GM13976 (cell line): ENCODE measurements at regions of chr14 and their contacts with region 1.

Region 1: GRCh38 chr14:105817971-105818711 is 291.8 kb downstream of the TMEM121 start:
- DNase-seq: peak; percentile 50
- CTCF ChIP-seq: no peak

Region 2: DNA sequence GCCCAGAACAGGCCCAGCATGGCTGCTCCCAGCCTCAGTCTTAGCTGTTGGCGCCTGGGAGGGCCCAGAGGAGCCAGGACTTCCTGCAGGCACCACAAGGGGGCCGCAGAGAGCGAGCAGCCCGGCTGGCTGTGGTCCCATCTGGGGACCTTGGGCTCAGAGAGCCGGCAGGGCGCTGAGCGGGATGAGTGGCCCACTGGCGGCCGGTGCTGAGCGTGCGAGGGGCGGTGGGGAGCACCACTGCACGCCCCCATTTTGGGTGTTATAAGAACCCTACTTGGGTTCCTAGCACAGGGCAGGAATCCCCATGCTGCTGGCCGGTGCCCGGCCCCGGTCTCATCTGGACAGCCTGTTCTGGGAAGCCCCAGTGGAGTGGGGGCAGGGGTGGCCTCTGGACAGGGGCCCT is 369.4 kb before region 1 on chr14:
- in situ Hi-C with region 1: no loop called
- DNase-seq: peak; percentile 89
- CTCF ChIP-seq: peak; percentile 78

Region 3: GRCh38 chr14:106268013-106268727 is 450.0 kb after region 1 on chr14:
- in situ Hi-C with region 1: loop called (anchors 10 kb)
- DNase-seq: peak; percentile 10
- CTCF ChIP-seq: peak; percentile 19